H1 (cell line): ENCODE measurements at regions of chr19 and their contacts with region 1.

Region 1: DNA sequence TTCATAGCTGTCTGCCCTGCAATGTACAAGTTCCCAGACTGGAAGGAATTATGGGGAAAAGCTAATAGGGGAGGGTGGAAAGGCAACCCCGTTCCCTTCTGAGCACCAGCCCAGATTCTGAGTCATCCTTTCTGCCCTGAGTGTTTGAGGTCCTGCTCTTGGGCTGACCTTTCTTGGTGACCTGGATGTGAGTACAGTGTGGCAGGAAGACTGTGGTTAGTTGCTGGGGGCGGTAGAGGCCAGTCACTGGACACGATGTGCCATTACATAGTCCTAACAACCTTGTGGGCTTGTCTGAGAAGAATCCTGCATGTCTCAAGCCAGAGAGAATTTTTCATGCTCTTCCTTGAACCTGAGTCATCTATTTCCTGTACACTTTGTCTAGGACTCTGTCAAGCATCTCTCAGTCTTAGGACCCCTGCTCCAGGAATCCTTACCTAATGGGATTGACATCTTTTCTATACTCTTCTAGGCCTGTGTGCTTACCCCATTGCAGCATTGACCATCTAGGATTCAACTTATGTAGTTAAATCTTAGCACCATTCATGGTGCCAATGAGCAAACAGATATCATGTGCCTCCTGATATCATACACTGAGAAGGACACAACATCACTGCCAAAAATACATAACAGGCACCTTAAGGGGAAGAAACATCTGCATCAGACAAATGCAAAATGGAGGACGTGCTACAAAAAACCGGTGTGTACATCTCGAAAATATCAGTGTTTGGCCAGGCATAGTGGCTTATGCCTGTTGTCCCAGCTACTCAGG is 8.1 kb upstream of the ANGPTL4 start:
- DNase-seq: no peak
- H3K4me3 ChIP-seq: no peak overlapping the region
- H3K27ac ChIP-seq: no peak overlapping the region
- H3K4me1 ChIP-seq: peaks cover 0 to 4% (median 2%) of the 10 kb centered on the region in 4 experiments; a peak in 3 of 7 replicates
- H3K27me3 ChIP-seq: no peaks in the 10 kb centered on the region
- CTCF ChIP-seq: no peak
- EP300 ChIP-seq: no peak
- POLR2A ChIP-seq: no peak
- RAD21 ChIP-seq: no peak

Region 2: GRCh38 chr19:8373867-8374813 is 18.3 kb after region 1 on chr19:
- CTCF ChIA-PET with region 1: interaction called, 45 read pairs
- POLR2A ChIA-PET with region 1: interaction called, 3 read pairs
- DNase-seq: no peak
- H3K4me3 ChIP-seq: no peak overlapping the region
- H3K27ac ChIP-seq: no peak overlapping the region
- H3K4me1 ChIP-seq: no peaks in the 10 kb centered on the region
- H3K27me3 ChIP-seq: no peaks in the 10 kb centered on the region
- CTCF ChIP-seq: peak in 2 of 3 experiments; percentile 24 to 31; a peak in 2 of 4 replicates
- EP300 ChIP-seq: no peak
- POLR2A ChIP-seq: no peak
- RAD21 ChIP-seq: peak; percentile 30 to 52; a peak in 3 of 4 replicates

Region 3: DNA sequence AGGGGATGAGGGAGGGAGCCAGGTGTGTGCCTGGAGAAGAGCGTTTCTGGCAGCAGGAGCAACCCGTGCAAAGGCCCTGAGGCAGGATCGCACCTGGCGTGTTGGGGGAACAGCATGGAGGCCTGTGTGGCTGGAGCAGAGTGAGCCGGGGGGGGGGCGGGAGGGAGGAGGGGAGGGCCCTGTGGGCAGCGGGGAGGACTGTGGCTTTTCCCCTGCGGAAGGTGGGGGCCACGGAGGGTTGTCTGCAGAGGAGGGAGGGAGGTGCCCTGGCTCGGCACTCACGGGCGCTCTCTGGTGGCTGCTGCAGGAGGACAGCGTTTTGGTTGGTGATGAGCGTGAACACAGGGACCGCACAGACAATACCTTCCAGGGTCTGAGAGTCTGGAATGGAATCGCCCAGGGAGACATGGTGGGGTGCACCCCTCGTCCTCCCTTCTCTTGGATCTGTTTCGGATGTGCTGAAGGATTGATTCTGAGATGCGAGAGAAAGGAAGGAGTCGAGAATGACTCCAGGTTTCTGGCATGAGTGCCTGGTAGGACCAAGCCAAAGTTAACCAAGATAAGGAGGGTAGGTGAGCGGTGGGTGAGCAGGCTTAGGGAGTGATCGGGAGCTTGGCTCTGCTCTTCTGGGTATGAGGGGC is 40.9 kb after region 1 on chr19:
- CTCF ChIA-PET with region 1: interaction called, 47 read pairs
- POLR2A ChIA-PET with region 1: interaction called, 11 read pairs
- DNase-seq: peak in 1 of 2 experiments; percentile 90
- H3K4me3 ChIP-seq: no peak overlapping the region
- H3K27ac ChIP-seq: no peak overlapping the region; the same call in 1 of the 2 replicates
- H3K4me1 ChIP-seq: peaks cover 0 to 1% (median 0%) of the 10 kb centered on the region in 4 experiments; a peak in 3 of 7 replicates
- H3K27me3 ChIP-seq: no peaks in the 10 kb centered on the region
- CTCF ChIP-seq: peak; percentile 85 to 90 (median 87)
- EP300 ChIP-seq: no peak
- POLR2A ChIP-seq: no peak
- RAD21 ChIP-seq: peak; percentile 64 to 71

Region 4: GRCh38 chr19:8426283-8426682 is 70.5 kb after region 1 on chr19:
- CTCF ChIA-PET with region 1: interaction called, 16 read pairs
- POLR2A ChIA-PET with region 1: interaction called, 3 read pairs
- DNase-seq: no peak
- H3K4me3 ChIP-seq: no peak overlapping the region
- H3K27ac ChIP-seq: no peak overlapping the region
- H3K4me1 ChIP-seq: peaks cover 0 to 2% (median 0%) of the 10 kb centered on the region in 4 experiments; a peak in 1 of 7 replicates
- H3K27me3 ChIP-seq: no peaks in the 10 kb centered on the region
- CTCF ChIP-seq: no peak
- EP300 ChIP-seq: no peak
- POLR2A ChIP-seq: no peak
- RAD21 ChIP-seq: no peak

Region 5: DNA sequence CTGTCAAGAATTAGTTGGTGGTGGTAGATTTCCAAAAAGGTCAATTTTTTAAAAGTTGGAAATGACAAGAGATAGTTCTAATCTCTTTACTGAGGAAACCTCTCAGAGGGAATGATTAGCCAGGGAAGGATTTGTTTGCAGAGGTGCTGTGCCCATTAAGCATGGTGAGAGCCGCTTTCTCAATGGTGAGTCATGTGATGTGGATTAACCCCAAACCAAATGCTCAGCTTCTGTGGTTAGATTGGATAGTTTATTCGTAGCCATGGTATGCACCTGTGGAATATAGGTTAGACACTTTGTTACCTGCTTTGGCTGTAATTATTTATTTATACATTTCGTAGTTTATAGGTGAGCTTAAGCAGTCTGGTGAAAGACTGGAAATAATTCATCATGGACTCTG is 96.1 kb after region 1 on chr19:
- CTCF ChIA-PET with region 1: interaction called, 11 read pairs
- POLR2A ChIA-PET with region 1: interaction called, 4 read pairs
- DNase-seq: no peak
- H3K4me3 ChIP-seq: no peak overlapping the region
- H3K27ac ChIP-seq: no peak overlapping the region
- H3K4me1 ChIP-seq: peaks cover 6 to 35% (median 25%) of the 10 kb centered on the region in 4 experiments
- H3K27me3 ChIP-seq: no peaks in the 10 kb centered on the region
- CTCF ChIP-seq: no peak
- EP300 ChIP-seq: no peak
- POLR2A ChIP-seq: no peak
- RAD21 ChIP-seq: no peak